ENCODE measurements at regions of chr3 and their contacts with region 1.

Region 1: GRCh38 chr3:71397046-71397445 is 186.5 kb downstream of the FOXP1 start:
- DNase-seq: no peak
- ATAC-seq: no peak
- H3K4me3 ChIP-seq: peak overlapping the region; percentile 3
- H3K4me3 Mint-ChIP-seq: peak overlapping the region in 9 of 10 donors; percentile 54 to 80 (median 73)
- H3K27ac ChIP-seq: peak overlapping the region; percentile 86
- H3K27ac Mint-ChIP-seq: peak overlapping the region in 8 of 9 donors; percentile 81 to 98 (median 92)
- H3K4me1 ChIP-seq: peaks cover 39 to 79% of the 10 kb centered on the region in 2 donors
- H3K4me1 Mint-ChIP-seq: peaks cover 23 to 95% (median 84%) of the 10 kb centered on the region in 7 donors
- H3K27me3 ChIP-seq: no peaks in the 10 kb centered on the region
- H3K27me3 Mint-ChIP-seq: peaks cover 0 to 52% (median 0%) of the 10 kb centered on the region in 5 donors

Region 2: DNA sequence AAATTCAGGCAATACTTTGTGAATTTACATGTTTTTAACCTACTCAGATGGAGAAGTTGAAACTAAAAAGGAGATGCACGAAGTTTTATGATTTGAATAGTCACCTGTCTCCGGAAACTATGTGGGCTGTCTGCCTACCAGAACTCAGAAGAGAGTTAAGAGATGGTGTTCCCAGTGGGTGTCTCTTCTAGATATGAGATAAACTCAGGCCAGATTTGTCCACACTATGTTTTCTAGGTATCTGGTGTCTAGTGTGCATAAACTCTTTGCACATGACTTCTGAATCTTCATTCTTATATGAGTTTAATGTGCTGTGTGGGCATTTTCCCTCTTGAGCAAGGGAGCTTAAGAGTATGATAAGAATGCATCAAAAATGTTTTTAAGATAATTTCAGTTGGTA is 36.3 kb before region 1 on chr3:
- CTCF ChIA-PET with region 1: interaction called, 3 read pairs
- POLR2A ChIA-PET with region 1: interaction called, 5 read pairs
- intact Hi-C with region 1: loop called in 1 of 2 experiments (anchors 5 kb)
- DNase-seq: peak in 4 of 9 donors; percentile 29 to 55 (median 40)
- ATAC-seq: peak; percentile 69
- H3K4me3 ChIP-seq: peak overlapping the region; percentile 1
- H3K4me3 Mint-ChIP-seq: peak overlapping the region; percentile 14 to 84 (median 76)
- H3K27ac ChIP-seq: peak overlapping the region; percentile 66
- H3K27ac Mint-ChIP-seq: peak overlapping the region; percentile 52 to 97 (median 90)
- H3K4me1 ChIP-seq: peaks cover 14 to 79% of the 10 kb centered on the region in 2 donors
- H3K4me1 Mint-ChIP-seq: peaks cover 25 to 97% (median 93%) of the 10 kb centered on the region in 7 donors
- H3K27me3 ChIP-seq: no peaks in the 10 kb centered on the region
- H3K27me3 Mint-ChIP-seq: peaks cover 0 to 16% (median 0%) of the 10 kb centered on the region in 5 donors

Region 3: DNA sequence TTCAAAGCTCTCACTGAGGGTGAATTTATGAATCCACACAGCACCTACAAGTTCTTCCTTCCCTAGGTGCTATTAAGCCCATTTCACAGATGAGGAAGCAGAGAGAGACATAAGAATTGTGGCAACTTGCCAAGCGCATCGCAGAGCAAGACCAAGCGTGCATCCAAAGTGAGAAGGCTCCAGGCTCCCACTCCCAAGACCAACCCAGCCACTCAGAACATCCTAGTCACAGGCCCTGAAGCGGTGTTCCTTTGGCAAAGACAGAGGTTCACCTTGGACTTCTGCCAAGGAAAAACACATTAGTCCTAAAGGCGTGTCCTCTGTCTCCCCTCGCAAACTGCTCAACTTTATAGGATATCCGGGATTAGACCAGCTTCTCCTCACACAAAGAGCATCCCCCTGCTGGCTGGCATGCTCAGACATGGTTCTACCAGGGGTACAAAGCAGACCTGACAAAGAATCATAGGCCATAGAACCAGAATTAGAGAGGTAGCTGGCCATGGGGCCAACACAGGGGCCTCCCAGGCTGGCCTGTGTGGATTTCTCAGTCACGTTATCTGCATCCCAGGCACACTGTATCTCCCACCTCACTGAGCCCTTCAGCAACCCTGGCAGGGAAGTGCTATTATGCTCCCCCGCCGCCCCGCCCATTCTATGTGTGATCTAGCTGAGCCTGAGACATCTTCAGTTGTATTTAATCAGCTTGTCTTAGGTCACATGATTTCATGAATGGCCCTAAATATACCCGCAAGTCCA is 26.3 kb after region 1 on chr3:
- CTCF ChIA-PET with region 1: interaction called, 4 read pairs
- POLR2A ChIA-PET with region 1: interaction called, 3 read pairs
- intact Hi-C with region 1: loop called in 1 of 2 experiments (anchors 2 kb)
- DNase-seq: no peak
- ATAC-seq: no peak
- H3K4me3 ChIP-seq: peak overlapping the region; percentile 24
- H3K4me3 Mint-ChIP-seq: peak overlapping the region in 9 of 10 donors; percentile 35 to 85 (median 65)
- H3K27ac ChIP-seq: peak overlapping the region; percentile 73
- H3K27ac Mint-ChIP-seq: peak overlapping the region; percentile 78 to 99 (median 98)
- H3K4me1 ChIP-seq: peaks cover 28 to 80% of the 10 kb centered on the region in 2 donors
- H3K4me1 Mint-ChIP-seq: peaks cover 42 to 98% (median 95%) of the 10 kb centered on the region in 7 donors
- H3K27me3 ChIP-seq: no peaks in the 10 kb centered on the region
- H3K27me3 Mint-ChIP-seq: peaks cover 0 to 46% (median 0%) of the 10 kb centered on the region in 5 donors

Region 4: DNA sequence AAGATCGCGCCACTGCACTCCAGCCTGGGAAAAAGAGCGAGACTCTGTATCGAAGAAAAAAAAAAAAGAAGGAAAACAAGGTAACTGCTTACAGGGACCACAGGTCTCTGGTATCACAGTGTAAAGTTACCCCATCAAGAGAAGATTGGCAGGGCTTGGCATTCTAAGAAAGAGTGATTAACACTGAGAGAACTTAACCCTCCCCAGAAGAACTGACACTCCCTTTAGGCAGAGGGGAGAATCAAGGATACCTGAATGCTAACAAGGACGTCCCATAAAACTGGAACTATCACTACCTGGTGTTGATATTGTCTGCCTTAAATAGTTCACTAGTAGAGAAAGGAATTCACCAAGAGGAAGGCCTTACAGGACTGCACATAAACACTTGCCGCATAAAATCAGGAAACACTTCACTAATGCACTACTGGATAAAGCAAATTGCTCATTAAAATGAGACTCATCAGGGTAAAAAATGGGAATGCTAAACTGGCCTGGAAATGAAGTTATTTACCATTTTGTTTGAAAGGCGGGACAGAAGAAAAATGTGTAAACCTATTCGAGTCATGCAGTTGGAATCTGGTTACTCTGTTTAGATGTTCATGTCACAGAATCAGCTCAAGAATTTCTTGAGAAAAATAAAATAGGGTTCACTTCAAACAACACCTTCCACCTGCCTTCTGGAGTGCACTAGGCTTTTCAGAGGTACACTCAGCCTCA is 64.9 kb after region 1 on chr3:
- CTCF ChIA-PET with region 1: no interaction called
- POLR2A ChIA-PET with region 1: no interaction called
- intact Hi-C with region 1: no loop called
- DNase-seq: no peak
- ATAC-seq: no peak
- H3K4me3 ChIP-seq: no peak overlapping the region
- H3K4me3 Mint-ChIP-seq: peak overlapping the region in 7 of 10 donors; percentile 17 to 61 (median 42)
- H3K27ac ChIP-seq: peak overlapping the region; percentile 29
- H3K27ac Mint-ChIP-seq: peak overlapping the region in 8 of 9 donors; percentile 78 to 99 (median 93)
- H3K4me1 ChIP-seq: peaks cover 19 to 54% of the 10 kb centered on the region in 2 donors
- H3K4me1 Mint-ChIP-seq: peaks cover 25 to 98% (median 83%) of the 10 kb centered on the region in 7 donors
- H3K27me3 ChIP-seq: no peaks in the 10 kb centered on the region
- H3K27me3 Mint-ChIP-seq: peaks cover 0 to 12% (median 0%) of the 10 kb centered on the region in 5 donors